Activated CD8-positive, alpha-beta T cell treated with anti-CD3 and anti-CD28 coated beads for 36 hours (primary cell): ENCODE measurements at regions of chr12 and their contacts with region 1.

Region 1: DNA sequence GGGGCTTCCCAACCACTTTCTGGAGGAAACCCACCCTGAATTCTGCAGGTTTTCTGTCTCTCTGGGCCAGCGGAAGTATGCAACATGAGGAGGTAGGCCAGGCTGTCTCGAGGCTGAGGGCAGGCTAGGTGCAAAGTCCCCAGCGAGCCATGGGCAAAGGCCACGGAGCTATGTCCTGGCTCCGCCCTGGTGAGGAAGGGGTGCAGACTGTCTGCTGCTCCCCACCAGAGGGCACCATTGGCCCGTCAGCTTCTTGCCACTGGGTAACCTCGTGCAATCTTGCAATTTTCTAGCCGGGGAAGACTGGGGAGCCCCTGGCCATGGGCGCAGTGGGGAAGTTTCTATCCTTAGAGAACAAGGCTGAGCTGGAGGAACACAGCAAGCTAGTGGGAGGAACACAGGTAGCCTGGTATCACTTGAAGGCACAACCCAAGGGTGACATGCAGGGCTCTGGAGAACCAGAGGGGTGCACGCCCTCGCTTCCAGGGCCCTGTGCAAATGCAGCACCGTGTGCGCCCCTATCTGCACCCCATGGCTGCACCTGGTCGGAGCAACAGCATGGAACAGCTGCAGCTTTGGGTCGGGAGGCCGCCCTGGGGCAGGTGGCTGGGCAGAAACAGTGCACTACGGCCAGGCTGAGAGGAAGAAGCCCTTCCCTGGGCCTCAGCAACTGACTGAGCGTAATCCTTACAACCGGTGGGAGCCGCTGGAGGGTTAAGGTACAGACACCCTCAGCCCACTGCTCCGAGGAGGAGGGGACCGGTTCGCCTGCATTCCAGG is 27.6 kb upstream of the RPLP0 start:
- DNase-seq: peak; percentile 92
- ATAC-seq: peak; percentile 72
- H3K4me3 Mint-ChIP-seq: peak overlapping the region; percentile 0
- H3K27ac Mint-ChIP-seq: peak overlapping the region; percentile 36
- H3K4me1 Mint-ChIP-seq: peaks cover 77% of the 10 kb centered on the region
- H3K27me3 Mint-ChIP-seq: no peaks in the 10 kb centered on the region
- CTCF ChIP-seq: peak; percentile 83

Region 2: DNA sequence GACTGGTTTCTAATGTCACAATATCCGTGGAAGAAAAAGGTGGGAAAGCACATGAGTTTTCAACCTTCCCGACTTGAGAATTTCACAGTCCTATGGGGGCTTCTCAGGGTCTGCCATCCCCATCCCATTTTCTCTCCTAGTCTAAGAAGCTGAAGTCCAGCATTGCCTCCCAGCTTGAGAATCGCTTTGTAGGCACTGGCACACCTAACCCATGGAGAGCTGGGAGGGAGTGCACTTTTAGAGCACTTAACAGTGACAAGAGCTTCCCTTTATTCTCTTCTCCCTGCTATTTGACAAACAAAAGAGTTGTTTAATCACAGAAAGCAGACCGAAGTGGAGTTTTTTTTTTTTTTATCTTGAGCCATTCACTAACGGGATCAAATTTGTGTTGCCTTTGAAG is 1270.0 kb before region 1 on chr12:
- CTCF ChIA-PET with region 1: no interaction called
- POLR2A ChIA-PET with region 1: no interaction called
- intact Hi-C with region 1: no loop called
- DNase-seq: no peak
- ATAC-seq: no peak
- H3K4me3 Mint-ChIP-seq: no peak overlapping the region
- H3K27ac Mint-ChIP-seq: no peak overlapping the region
- H3K4me1 Mint-ChIP-seq: no peaks in the 10 kb centered on the region
- H3K27me3 Mint-ChIP-seq: no peaks in the 10 kb centered on the region
- CTCF ChIP-seq: no peak

Region 3: DNA sequence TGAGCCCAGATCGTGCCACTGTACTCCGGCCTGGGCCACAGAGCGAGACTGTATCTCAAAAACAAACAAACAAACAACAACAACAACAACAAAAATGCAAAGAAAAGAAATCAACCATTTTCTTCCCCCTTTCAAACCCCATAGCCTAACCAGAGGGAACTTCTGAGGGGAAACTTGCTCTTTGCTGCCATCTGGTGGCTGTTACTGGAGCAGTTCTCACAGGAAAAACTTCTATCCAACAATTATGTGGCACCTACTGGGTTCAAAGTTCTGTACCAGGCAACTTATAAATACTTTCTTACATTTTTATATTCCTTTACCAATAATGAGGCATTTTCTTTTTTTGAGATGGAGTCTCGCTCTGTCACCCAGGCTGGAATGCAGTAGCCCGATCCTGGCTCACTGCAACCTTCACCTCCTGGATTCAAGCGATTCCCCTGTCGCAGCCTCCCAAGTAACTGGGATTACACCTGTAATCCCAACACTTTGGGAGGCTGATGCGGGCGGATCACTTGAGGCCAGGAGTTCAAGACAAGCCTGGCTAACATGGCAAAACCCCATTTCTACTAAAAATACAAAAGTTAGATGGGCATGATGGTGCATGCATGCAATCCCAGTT is 290.3 kb before region 1 on chr12:
- CTCF ChIA-PET with region 1: no interaction called
- POLR2A ChIA-PET with region 1: no interaction called
- intact Hi-C with region 1: no loop called
- DNase-seq: peak; percentile 80
- ATAC-seq: peak; percentile 78
- H3K4me3 Mint-ChIP-seq: no peak overlapping the region
- H3K27ac Mint-ChIP-seq: no peak overlapping the region
- H3K4me1 Mint-ChIP-seq: no peaks in the 10 kb centered on the region
- H3K27me3 Mint-ChIP-seq: peaks cover 5% of the 10 kb centered on the region
- CTCF ChIP-seq: peak; percentile 78

Region 4: DNA sequence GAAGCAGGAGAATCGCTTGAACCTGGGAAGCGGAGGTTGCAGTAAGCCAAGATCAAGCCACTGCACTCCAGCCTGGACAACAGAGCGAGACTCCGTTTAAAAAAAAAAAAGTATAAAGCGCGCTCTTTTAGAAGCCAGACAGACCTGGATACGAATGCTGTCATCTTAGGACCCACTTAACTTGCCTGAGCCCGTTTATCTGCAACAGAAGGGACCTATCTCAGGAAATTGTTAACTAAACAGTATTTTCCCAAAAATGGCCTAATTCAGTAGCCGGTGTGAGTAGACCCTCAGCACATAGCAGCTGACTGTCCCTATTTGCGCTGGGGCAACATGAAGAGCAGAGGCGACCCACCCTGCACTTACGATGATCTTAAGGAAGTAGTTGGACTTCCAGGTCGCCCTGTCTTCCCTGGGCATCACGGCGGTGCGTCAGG is 28.1 kb before region 1 on chr12:
- CTCF ChIA-PET with region 1: interaction called, 18 read pairs
- POLR2A ChIA-PET with region 1: interaction called, 139 read pairs
- intact Hi-C with region 1: no loop called
- DNase-seq: no peak
- ATAC-seq: no peak
- H3K4me3 Mint-ChIP-seq: peak overlapping the region; percentile 97
- H3K27ac Mint-ChIP-seq: peak overlapping the region; percentile 95
- H3K4me1 Mint-ChIP-seq: peaks cover 37% of the 10 kb centered on the region
- H3K27me3 Mint-ChIP-seq: no peaks in the 10 kb centered on the region
- CTCF ChIP-seq: no peak

Region 5: DNA sequence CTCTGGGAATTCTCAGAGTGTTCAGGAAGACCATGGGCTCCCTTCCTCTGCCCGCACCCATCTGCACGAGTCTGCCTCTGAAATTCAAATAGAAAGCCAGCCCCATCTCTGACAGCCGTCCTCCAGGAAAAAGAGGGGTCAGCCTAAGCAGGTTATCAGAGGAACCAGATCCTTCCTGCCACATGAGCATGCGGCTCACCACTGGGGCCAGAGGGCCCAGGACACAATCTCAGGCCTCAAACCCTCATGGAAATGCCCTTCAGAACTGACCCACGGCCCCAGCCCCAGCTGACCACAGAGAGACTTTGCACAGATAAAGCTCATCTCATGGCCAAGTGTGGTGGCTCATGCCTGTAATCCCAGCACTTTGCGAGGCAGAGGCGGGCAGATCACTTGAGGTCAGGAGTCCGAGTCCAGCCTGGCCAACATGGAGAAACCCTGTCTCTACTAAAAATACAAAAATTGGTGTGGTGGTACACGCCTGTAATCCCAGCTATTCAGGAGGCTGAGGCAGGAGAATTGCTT is 13.9 kb after region 1 on chr12:
- CTCF ChIA-PET with region 1: interaction called, 749 read pairs
- POLR2A ChIA-PET with region 1: interaction called, 31 read pairs
- intact Hi-C with region 1: no loop called
- DNase-seq: no peak
- ATAC-seq: no peak
- H3K4me3 Mint-ChIP-seq: no peak overlapping the region
- H3K27ac Mint-ChIP-seq: no peak overlapping the region
- H3K4me1 Mint-ChIP-seq: peaks cover 57% of the 10 kb centered on the region
- H3K27me3 Mint-ChIP-seq: no peaks in the 10 kb centered on the region
- CTCF ChIP-seq: no peak

Region 6: DNA sequence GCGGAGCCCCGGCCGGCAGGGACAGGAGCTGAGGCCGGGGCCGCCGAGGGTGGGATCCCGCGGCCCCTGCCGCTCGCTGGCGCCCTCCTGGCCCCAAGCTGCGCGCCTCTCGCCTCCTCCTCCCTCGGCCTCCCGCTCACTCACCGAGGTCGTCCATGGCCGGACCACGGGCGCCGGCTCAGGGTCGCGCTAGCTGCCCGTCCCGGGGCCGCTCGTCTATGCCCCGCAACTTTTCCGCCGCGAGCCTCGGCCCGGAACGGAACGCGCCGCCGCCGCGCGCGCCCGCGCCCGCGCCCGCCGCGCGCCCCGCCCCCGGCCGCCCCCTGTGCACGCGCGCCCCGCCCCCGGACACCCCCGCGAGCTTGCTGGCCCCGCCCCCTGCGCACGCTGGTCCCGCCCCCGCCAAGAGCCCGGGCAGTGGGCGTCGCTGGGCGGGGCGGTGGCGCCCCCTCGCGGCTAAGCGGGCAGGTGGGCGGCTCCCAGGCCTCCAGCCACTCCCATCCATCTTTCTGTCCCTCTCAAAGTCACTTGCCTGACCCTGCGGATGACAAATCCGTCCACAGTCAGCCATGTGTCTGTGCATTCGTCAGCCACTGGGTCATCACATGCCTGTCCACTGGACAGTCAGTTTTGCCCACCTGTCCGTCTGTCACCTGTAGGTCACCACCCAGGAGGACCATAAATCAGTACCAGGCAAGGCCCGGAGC is 37.1 kb after region 1 on chr12 and contains the start of gene PXN:
- CTCF ChIA-PET with region 1: interaction called, 749 read pairs
- POLR2A ChIA-PET with region 1: interaction called, 179 read pairs
- intact Hi-C with region 1: loop called (anchors 1 kb)
- DNase-seq: peak; percentile 88
- ATAC-seq: peak; percentile 82
- H3K4me3 Mint-ChIP-seq: peak within 1 kb of the TSS; percentile 78
- H3K27ac Mint-ChIP-seq: peak within 1 kb of the TSS; percentile 79
- H3K4me1 Mint-ChIP-seq: peaks cover 45% of the 10 kb centered on the region
- H3K27me3 Mint-ChIP-seq: no peaks in the 10 kb centered on the region
- CTCF ChIP-seq: peak; percentile 71
- total RNA-seq, gene PXN: 40.2 to 45.3 TPM

Region 7: GRCh38 chr12:120286796-120287465 is 58.5 kb after region 1 on chr12:
- CTCF ChIA-PET with region 1: interaction called, 114 read pairs
- POLR2A ChIA-PET with region 1: interaction called, 394 read pairs
- intact Hi-C with region 1: no loop called
- DNase-seq: no peak
- ATAC-seq: no peak
- H3K4me3 Mint-ChIP-seq: no peak overlapping the region
- H3K27ac Mint-ChIP-seq: no peak overlapping the region
- H3K4me1 Mint-ChIP-seq: peaks cover 12% of the 10 kb centered on the region
- H3K27me3 Mint-ChIP-seq: no peaks in the 10 kb centered on the region
- CTCF ChIP-seq: no peak

Region 8: GRCh38 chr12:120317224-120318105 is 89.0 kb after region 1 on chr12:
- CTCF ChIA-PET with region 1: interaction called, 10 read pairs
- POLR2A ChIA-PET with region 1: no interaction called
- intact Hi-C with region 1: no loop called
- DNase-seq: peak; percentile 100
- ATAC-seq: peak; percentile 100
- H3K4me3 Mint-ChIP-seq: peak overlapping the region; percentile 96
- H3K27ac Mint-ChIP-seq: peak overlapping the region; percentile 95
- H3K4me1 Mint-ChIP-seq: peaks cover 10% of the 10 kb centered on the region
- H3K27me3 Mint-ChIP-seq: no peaks in the 10 kb centered on the region
- CTCF ChIP-seq: peak; percentile 64